Heart left ventricle (tissue), 16 donors: ENCODE measurements at regions of chr3 and their contacts with region 1.

Region 1: DNA sequence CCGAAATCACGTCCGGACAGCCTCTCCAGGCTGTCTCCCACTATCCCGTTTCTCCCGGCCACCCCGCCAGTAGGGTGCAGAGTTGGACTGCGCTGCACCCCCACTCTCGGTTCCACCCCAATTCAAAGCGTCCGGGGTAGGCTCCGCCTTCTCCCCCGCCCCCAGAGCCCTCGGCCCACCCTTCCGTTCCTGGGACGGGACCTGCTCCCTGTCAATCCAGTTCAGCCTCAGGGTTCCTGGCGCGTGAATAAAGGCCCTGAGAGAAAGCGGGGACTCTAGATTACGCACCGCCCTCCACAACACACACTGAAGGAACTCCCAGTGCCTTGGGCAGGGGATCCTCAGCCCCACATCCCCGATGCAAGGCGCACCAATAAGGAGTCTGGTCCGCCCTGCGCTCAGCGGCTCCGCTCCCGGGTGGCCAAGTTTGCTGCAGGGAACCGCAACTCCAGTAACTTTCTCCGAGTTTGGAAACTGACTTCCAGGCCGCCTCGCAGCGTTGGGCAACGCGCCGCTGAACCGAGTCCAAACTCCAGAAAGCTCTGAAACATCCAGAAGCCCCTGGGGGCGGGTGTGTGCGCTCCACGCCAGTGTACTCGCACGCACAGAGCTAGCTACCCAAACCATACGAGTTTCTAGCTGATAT is 1.9 kb downstream of the ADAMTS9 start:
- DNase-seq: peak; percentile 94 to 96 (median 95)
- ATAC-seq: peak; percentile 87 to 95 (median 92)
- H3K4me3 ChIP-seq: peak overlapping the region; percentile 60 to 86 (median 71)
- H3K27ac ChIP-seq: peak overlapping the region; percentile 89 to 98 (median 96)
- H3K4me1 ChIP-seq: peaks cover 0 to 50% (median 4%) of the 10 kb centered on the region in 12 donors
- H3K27me3 ChIP-seq: peaks cover 0 to 17% (median 0%) of the 10 kb centered on the region in 9 donors
- CTCF ChIP-seq: peak; percentile 28 to 81 (median 66)
- POLR2A ChIP-seq: peak; percentile 14 to 84

Region 2: DNA sequence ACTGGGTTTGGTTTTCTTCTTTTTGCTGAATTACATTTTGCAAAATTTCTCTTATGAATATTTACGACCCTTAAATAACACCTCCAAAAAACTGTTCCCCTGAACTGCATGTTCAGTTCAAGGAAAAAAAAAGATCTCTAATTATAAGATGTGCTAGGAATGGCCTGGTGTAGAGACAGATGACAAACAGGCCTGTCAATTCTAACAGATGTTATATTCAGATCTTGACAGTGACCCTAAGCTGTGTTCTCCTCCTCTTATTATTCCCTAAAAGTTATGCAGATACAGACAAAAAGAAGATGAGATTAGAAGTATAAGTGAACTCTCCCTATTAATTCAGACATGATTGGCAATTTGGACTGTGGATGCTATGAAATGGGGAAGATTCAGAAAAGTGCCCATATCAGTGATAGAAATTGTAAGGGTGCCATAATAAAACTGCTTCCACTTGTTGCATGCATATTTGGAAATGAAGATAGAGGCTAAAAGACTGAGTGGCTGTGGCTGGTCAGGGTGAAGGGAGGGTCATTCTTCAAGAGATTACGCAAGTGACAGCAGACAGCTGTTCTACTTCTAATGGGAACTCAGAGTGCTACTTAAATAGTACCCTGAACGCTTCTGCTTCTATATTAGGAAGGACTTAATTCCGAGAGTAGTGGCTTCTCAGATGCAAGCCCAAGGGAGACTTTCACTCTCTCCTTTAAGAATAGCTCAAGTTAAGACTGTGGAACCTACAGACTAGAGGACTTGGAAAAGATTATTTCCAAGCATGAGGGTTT is 73.7 kb before region 1 on chr3:
- intact Hi-C with region 1: loop called in 3 of 10 experiments (anchors 2 to 10 kb)
- DNase-seq: peak in 4 of 5 donors; percentile 30 to 54 (median 50)
- ATAC-seq: peak; percentile 87 to 97 (median 96)
- H3K4me3 ChIP-seq: peak overlapping the region in 2 of 12 donors; percentile 6 to 10
- H3K27ac ChIP-seq: peak overlapping the region; percentile 60 to 86 (median 76)
- H3K4me1 ChIP-seq: peaks cover 0 to 46% (median 26%) of the 10 kb centered on the region in 12 donors
- H3K27me3 ChIP-seq: no peaks in the 10 kb centered on the region
- CTCF ChIP-seq: no peak
- POLR2A ChIP-seq: no peak

Region 3: DNA sequence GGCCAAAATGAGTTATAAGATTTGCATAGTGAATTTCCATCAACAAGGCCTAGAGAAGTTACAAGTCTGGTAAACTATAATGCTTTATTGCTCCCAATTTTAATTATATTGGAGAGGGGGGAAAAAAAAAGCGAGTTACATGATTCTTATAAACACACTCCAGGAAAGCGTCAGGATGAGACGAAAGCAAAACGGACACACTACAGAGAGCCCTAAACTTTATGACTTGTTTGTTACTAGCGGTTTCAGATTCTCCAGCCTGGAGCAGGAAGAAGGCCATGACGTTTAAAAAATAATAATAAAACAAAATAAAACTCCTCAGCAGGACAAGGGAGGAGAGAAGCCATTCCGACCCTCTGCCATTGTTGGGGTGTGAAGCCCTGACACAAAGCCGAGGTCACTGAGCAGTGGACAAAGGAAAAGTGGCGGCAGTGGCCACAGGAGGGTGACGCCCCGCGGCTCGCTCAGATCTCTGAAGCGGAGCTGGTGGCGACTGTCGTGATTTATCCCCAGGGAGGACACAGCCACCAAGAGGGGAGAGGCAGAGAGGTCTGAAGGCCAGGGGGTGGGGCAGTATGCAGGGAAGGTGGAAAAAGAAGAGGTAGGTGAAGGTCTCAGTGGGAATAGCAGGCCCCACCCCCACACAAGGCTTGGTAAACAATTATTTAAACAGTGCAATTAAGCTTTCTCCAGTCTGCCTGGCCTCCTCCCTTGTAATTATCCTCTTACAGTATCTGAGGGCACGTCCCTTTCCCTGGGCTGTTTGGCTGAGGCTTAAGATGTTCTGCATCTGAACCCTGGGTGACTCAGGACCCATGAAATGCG is 43.4 kb before region 1 on chr3:
- intact Hi-C with region 1: no loop called
- DNase-seq: no peak
- ATAC-seq: peak in 1 of 4 donors; percentile 24
- H3K4me3 ChIP-seq: no peak overlapping the region
- H3K27ac ChIP-seq: peak overlapping the region in 3 of 12 donors; percentile 18 to 71 (median 54)
- H3K4me1 ChIP-seq: peaks cover 0 to 4% (median 0%) of the 10 kb centered on the region in 12 donors
- H3K27me3 ChIP-seq: no peaks in the 10 kb centered on the region
- CTCF ChIP-seq: no peak
- POLR2A ChIP-seq: no peak

Region 4: DNA sequence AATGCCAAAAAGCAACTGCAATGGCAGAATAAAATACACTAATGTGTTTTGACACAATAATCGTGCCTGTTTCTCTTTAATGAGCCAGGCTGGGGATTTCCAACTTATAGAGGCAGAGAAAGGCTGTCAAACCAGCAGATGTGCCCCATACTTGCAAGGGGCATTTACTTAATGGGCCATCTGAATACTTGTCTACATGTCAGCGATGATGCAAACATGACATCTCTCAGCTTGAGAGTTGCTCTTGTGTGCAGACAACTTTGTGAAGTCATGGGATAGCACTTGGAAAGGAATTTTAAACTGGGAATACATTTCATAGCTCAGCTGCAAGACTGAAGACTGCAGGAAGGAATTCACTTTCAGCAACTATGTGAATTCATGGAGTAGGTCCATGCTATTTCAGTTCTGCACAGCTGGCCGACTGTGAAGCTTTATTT is 129.3 kb after region 1 on chr3:
- intact Hi-C with region 1: loop called in 3 of 10 experiments (anchors 2 to 5 kb)
- DNase-seq: peak in 3 of 5 donors; percentile 21 to 30 (median 23)
- ATAC-seq: peak; percentile 79 to 86 (median 82)
- H3K4me3 ChIP-seq: no peak overlapping the region
- H3K27ac ChIP-seq: peak overlapping the region; percentile 6 to 65 (median 43)
- H3K4me1 ChIP-seq: peaks cover 5 to 42% (median 22%) of the 10 kb centered on the region in 12 donors
- H3K27me3 ChIP-seq: no peaks in the 10 kb centered on the region
- CTCF ChIP-seq: peak in 1 of 12 donors; percentile 15
- POLR2A ChIP-seq: no peak

Region 5: DNA sequence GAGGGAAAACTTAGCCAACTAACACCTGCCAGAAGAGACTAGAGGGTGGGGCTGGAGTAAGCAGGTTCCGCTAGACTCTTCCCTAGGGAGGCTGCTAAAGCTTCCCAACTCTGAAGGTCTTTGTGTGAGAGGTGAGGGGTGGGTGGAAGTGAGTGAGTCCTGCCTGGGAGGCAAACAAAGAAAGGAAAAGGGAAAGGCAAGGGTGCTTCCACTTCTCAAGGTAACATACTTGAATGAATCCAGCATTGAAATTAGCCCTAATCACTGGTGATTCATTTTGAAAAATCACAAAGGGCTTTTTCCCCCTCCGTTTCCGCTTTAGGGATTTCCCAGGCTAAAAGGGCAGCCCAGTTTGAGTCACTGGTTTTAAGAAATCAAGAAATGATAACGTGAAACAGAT is 222.4 kb after region 1 on chr3:
- intact Hi-C with region 1: loop called in 8 of 10 experiments (anchors 1 to 10 kb)
- DNase-seq: peak in 3 of 5 donors; percentile 52 to 66 (median 65)
- ATAC-seq: peak; percentile 85 to 96 (median 88)
- H3K4me3 ChIP-seq: no peak overlapping the region
- H3K27ac ChIP-seq: peak overlapping the region in 11 of 12 donors; percentile 16 to 81 (median 67)
- H3K4me1 ChIP-seq: peaks cover 4 to 61% (median 30%) of the 10 kb centered on the region in 12 donors
- H3K27me3 ChIP-seq: no peaks in the 10 kb centered on the region
- CTCF ChIP-seq: no peak
- POLR2A ChIP-seq: no peak

Region 6: DNA sequence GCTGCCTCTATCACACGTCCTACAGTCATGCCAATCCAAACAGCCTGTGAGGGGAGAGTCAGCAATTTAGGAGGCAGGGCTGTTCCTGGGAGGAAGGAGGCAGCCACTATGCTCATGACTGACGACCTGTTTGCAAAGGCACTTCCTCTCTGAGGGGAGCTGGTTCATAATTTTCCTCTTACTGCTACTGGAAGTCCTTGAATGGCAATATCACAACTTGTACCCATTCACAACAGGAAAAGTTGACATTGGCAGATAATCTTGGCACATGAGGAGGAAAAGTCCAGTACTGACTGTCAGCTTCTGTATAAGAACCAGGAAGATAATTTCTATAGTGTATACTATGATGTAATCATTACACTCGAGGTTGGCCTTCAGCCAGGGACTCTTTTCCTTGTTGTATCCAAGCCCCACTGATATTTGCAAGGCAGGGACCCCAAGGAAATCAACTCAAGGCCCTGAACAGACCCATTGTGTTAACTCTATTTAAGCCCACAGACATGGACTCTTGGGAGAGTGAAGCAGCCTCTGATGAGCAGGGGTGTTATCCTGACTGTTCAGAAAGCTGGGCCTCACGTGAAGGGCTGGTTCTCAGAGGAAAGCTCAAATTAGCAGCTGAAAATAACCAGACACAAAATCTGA is 269.2 kb after region 1 on chr3:
- intact Hi-C with region 1: loop called in 1 of 10 experiments (anchors 5 kb)
- DNase-seq: peak in 2 of 5 donors; percentile 14 to 20
- ATAC-seq: peak in 3 of 4 donors; percentile 44 to 79 (median 75)
- H3K4me3 ChIP-seq: no peak overlapping the region
- H3K27ac ChIP-seq: peak overlapping the region in 4 of 12 donors; percentile 18 to 43 (median 32)
- H3K4me1 ChIP-seq: peaks cover 0 to 24% (median 8%) of the 10 kb centered on the region in 12 donors
- H3K27me3 ChIP-seq: no peaks in the 10 kb centered on the region
- CTCF ChIP-seq: no peak
- POLR2A ChIP-seq: no peak

Region 7: GRCh38 chr3:65170390-65171042 is 484.6 kb after region 1 on chr3:
- intact Hi-C with region 1: loop called (anchors 1 to 10 kb)
- DNase-seq: peak; percentile 84 to 95 (median 86)
- ATAC-seq: peak; percentile 79 to 97 (median 94)
- H3K4me3 ChIP-seq: no peak overlapping the region
- H3K27ac ChIP-seq: peak overlapping the region in 11 of 12 donors; percentile 40 to 85 (median 75)
- H3K4me1 ChIP-seq: peaks cover 0 to 27% (median 17%) of the 10 kb centered on the region in 12 donors
- H3K27me3 ChIP-seq: no peaks in the 10 kb centered on the region
- CTCF ChIP-seq: peak; percentile 21 to 65 (median 52)
- POLR2A ChIP-seq: no peak

Region 8: DNA sequence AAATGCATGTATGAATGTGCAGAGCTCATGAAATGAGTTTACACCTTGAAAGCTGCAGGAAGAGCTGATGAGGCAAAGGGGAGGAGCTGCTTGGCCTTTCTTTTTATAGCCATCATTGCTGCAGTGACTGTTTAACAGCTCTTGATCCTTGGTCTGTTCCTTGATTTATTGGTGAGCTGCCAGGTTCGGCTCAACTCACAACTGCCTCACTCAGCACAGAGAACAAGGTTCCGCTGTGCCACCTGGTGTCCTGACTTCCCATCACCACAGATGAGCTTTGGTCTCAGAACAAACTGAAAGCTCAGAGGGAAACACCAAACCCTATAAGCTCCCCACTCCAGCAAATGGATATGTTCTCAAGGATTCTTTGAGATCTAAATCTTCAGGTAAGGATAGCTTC is 726.7 kb after region 1 on chr3:
- intact Hi-C with region 1: loop called in 2 of 10 experiments (anchors 5 to 10 kb)
- DNase-seq: peak in 4 of 5 donors; percentile 74 to 81 (median 76)
- ATAC-seq: peak; percentile 88 to 93 (median 92)
- H3K4me3 ChIP-seq: no peak overlapping the region
- H3K27ac ChIP-seq: peak overlapping the region in 6 of 12 donors; percentile 49 to 81 (median 56)
- H3K4me1 ChIP-seq: peaks cover 7 to 57% (median 31%) of the 10 kb centered on the region in 12 donors
- H3K27me3 ChIP-seq: no peaks in the 10 kb centered on the region
- CTCF ChIP-seq: peak in 9 of 12 donors; percentile 30 to 66 (median 43)
- POLR2A ChIP-seq: no peak